B cell (primary cell): ENCODE measurements at regions of chr2 and their contacts with region 1.

Region 1: GRCh38 chr2:170973492-170974303 is 44.6 kb downstream of the GORASP2 start:
- DNase-seq: peak; percentile 92
- ATAC-seq: peak; percentile 97
- H3K4me3 ChIP-seq: peak overlapping the region; percentile 43 to 86 (median 80)
- H3K4me3 Mint-ChIP-seq: peak overlapping the region; percentile 92
- H3K27ac ChIP-seq: peak overlapping the region; percentile 42 to 61
- H3K27ac Mint-ChIP-seq: peak overlapping the region; percentile 78
- H3K4me1 ChIP-seq: peaks cover 11 to 12% of the 10 kb centered on the region in 2 donors
- H3K4me1 Mint-ChIP-seq: peaks cover 12% of the 10 kb centered on the region
- H3K27me3 ChIP-seq: no peaks in the 10 kb centered on the region
- H3K27me3 Mint-ChIP-seq: no peaks in the 10 kb centered on the region
- CTCF ChIP-seq: peak; percentile 94

Region 2: GRCh38 chr2:170922634-170923494 is 50.8 kb before region 1 on chr2:
- CTCF ChIA-PET with region 1: no interaction called
- POLR2A ChIA-PET with region 1: no interaction called
- intact Hi-C with region 1: no loop called
- DNase-seq: peak; percentile 38
- ATAC-seq: peak; percentile 41
- H3K4me3 ChIP-seq: no peak overlapping the region
- H3K4me3 Mint-ChIP-seq: no peak overlapping the region
- H3K27ac ChIP-seq: no peak overlapping the region
- H3K27ac Mint-ChIP-seq: no peak overlapping the region
- H3K4me1 ChIP-seq: peaks cover 4% of the 10 kb centered on the region in 2 donors
- H3K4me1 Mint-ChIP-seq: peaks cover 2% of the 10 kb centered on the region
- H3K27me3 ChIP-seq: peaks cover 0 to 2% (median 0%) of the 10 kb centered on the region in 4 experiments
- H3K27me3 Mint-ChIP-seq: no peaks in the 10 kb centered on the region
- CTCF ChIP-seq: no peak

Region 3: DNA sequence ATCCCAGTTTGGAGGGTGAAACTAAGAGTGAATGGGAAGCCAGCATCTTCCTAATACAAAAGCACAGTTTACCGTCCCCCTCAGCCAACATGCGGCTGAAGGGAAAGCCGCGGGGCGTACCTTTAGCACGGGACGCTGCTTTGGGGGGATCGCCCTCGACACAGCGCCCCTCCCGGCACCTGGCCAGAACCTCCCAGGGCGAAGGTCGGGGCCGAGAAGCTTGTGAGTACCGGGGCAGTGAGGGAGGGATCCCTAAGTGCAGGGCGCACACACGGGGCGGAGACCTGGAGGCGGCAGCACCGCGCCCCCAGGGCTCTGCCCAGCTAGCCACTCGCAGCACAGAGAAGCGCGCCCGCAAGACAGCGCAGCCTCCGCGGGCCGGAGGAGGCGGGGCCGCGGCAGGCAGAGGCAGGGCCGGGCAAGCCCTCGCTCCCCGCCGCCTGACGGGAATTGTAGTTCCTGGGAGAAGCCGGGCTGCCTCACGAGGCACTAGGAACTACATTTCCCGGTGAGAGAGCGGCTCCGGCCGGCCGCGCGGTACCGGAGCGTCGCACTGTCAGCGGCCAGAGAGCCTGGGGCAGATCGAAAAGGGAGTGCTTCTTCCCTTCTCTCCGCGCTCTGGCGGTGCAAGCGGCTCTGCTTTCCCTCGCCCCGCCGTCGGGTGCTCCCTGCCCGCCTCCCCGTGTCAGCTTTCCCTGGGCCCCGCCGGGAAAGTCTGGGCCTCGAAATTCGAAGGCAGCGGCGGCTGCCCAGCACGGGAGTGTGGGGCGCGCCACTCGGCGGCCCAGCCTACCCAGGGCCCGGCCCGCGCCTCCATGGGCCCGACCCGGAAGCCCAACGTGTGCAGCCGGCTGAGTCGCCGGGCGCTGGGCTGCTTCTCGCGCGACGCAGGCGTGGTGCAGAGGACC is 460.3 kb after region 1 on chr2 and contains the starts of genes DCAF17 and METTL8:
- CTCF ChIA-PET with region 1: interaction called, 8 read pairs
- POLR2A ChIA-PET with region 1: no interaction called
- intact Hi-C with region 1: loop called (anchors 1 kb)
- DNase-seq: peak; percentile 96
- ATAC-seq: peak; percentile 89
- H3K4me3 ChIP-seq: peak within 1 kb of the TSS; percentile 67 to 87 (median 80)
- H3K4me3 Mint-ChIP-seq: peak within 1 kb of the TSS; percentile 91
- H3K27ac ChIP-seq: peak within 1 kb of the TSS; percentile 84 to 85
- H3K27ac Mint-ChIP-seq: peak within 1 kb of the TSS; percentile 96
- H3K4me1 ChIP-seq: peaks cover 7 to 10% of the 10 kb centered on the region in 2 donors
- H3K4me1 Mint-ChIP-seq: peaks cover 24% of the 10 kb centered on the region
- H3K27me3 ChIP-seq: no peaks in the 10 kb centered on the region
- H3K27me3 Mint-ChIP-seq: no peaks in the 10 kb centered on the region
- CTCF ChIP-seq: peak; percentile 61
- total RNA-seq, gene DCAF17: 27.9 and 29.4 TPM in 2 replicates
- total RNA-seq, gene METTL8: 57.8 and 58.6 TPM in 2 replicates

Region 4: GRCh38 chr2:171447675-171448074 is 474.0 kb after region 1 on chr2:
- CTCF ChIA-PET with region 1: interaction called, 11 read pairs
- POLR2A ChIA-PET with region 1: no interaction called
- intact Hi-C with region 1: loop called (anchors 1 kb)
- DNase-seq: peak; percentile 19
- ATAC-seq: no peak
- H3K4me3 ChIP-seq: no peak overlapping the region
- H3K4me3 Mint-ChIP-seq: no peak overlapping the region
- H3K27ac ChIP-seq: no peak overlapping the region
- H3K27ac Mint-ChIP-seq: no peak overlapping the region
- H3K4me1 ChIP-seq: no peaks in the 10 kb centered on the region
- H3K4me1 Mint-ChIP-seq: no peaks in the 10 kb centered on the region
- H3K27me3 ChIP-seq: no peaks in the 10 kb centered on the region
- H3K27me3 Mint-ChIP-seq: no peaks in the 10 kb centered on the region
- CTCF ChIP-seq: peak; percentile 26